Tibial artery (tissue), 4 donors: ENCODE measurements at regions of chr6 and their contacts with region 1.

Region 1: GRCh38 chr6:158972241-158973233 is 27.5 kb downstream of the RSPH3 start:
- DNase-seq: no peak
- H3K4me3 ChIP-seq: no peak overlapping the region
- H3K27ac ChIP-seq: no peak overlapping the region
- H3K4me1 ChIP-seq: no peaks in the 10 kb centered on the region
- H3K27me3 ChIP-seq: no peaks in the 10 kb centered on the region
- CTCF ChIP-seq: peak; percentile 49 to 66

Region 2: DNA sequence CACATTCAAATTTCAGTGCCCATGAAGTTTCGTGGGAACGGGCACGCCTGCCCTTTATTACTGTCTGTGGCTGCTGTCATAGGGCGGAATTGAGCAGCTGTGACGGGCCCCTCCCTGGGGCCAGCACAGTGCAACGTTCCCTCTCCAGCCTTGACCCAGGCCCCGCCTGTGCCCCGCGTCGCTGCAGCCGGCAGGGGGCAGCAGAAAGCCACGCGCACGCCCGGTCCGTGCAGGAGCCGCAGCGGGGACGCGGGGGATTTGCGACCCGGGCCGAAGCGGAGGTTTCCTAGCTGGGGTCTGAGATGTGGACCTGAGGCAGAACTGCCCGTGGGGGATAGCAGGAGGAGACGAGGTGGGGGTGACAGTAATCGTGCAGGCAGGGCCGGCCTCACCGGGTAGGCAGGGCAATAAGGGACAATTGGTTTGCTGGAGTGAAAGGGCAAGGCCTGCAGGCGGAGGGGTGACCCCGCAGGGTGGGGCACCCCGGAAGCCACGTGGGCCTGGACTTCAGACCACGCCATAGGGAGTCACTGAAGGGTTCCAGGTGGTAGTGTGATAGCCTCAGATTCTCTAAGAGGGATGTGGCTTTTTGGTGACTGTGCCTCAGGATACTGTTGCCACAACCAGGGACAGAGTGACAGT is 268.2 kb before region 1 on chr6:
- intact Hi-C with region 1: loop called (anchors 5 kb)
- DNase-seq: peak; percentile 69 to 87
- H3K4me3 ChIP-seq: peak overlapping the region; percentile 40 to 48
- H3K27ac ChIP-seq: peak overlapping the region; percentile 36 to 49
- H3K4me1 ChIP-seq: peaks cover 0 to 46% (median 31%) of the 10 kb centered on the region in 4 donors
- H3K27me3 ChIP-seq: no peaks in the 10 kb centered on the region
- CTCF ChIP-seq: peak; percentile 96 to 99

Region 3: GRCh38 chr6:159577564-159577963 is 605.0 kb after region 1 on chr6:
- intact Hi-C with region 1: no loop called
- DNase-seq: no peak
- H3K4me3 ChIP-seq: no peak overlapping the region
- H3K27ac ChIP-seq: no peak overlapping the region
- H3K4me1 ChIP-seq: peaks cover 0 to 1% (median 0%) of the 10 kb centered on the region in 4 donors
- H3K27me3 ChIP-seq: no peaks in the 10 kb centered on the region
- CTCF ChIP-seq: no peak